WTC11 (cell line): ENCODE measurements at regions of chr17 and their contacts with region 1.

Region 1: DNA sequence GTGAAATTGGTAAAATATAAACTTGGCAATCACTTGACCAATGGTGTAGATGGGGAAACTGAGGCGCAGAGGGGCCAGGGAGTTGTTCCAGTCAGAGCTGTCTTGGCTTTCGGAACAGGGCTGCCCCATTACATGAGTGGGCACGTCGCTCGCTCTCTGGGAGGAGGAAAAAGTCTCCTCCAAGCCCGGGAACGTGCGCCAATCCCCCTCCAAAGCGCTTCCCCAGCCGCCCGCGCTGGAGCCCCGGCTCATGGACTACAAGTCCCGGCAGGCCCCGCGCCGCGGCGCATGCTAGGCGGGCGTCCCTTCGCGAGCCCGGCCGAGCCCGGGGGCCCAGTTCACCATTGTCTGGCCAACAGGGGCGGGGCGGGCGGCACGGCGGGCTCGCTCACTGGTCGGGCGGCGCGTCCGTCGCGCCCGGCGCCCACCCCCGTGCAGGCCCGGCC is 291 bp upstream of the LLGL1 start:
- DNase-seq: peak; percentile 98
- ATAC-seq: peak; percentile 72
- H3K4me3 Mint-ChIP-seq: peak overlapping the region; percentile 93
- H3K27ac Mint-ChIP-seq: peak overlapping the region; percentile 100
- H3K4me1 Mint-ChIP-seq: peaks cover 23% of the 10 kb centered on the region
- H3K27me3 Mint-ChIP-seq: no peaks in the 10 kb centered on the region
- CTCF ChIP-seq: no peak

Region 2: DNA sequence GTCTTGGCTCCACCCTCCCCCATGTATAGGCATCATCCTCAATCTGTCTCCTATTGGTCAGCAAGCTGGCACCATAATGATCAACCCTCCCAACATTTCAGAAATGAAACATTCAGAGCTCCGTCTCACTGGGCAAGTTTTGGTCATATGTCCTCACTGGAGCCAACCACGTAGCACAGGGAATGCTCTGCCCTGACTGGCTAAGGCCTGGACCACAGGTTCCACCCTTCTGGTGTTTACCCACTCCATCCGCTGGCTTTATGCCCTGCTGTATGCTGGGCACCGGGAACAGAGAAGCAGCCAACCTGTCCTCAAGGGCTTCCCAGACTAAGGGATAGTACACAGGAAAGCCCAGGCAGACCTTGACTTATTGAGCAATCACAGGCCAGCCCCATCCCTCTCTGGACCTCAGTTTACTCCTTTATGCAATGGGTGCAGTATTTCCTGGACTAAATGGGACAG is 96.1 kb before region 1 on chr17:
- CTCF ChIA-PET with region 1: no interaction called
- POLR2A ChIA-PET with region 1: no interaction called
- DNase-seq: no peak
- ATAC-seq: no peak
- H3K4me3 Mint-ChIP-seq: no peak overlapping the region
- H3K27ac Mint-ChIP-seq: no peak overlapping the region; the same call in 1 of the 2 replicates
- H3K4me1 Mint-ChIP-seq: no peaks in the 10 kb centered on the region; the same call in 1 of the 2 replicates
- H3K27me3 Mint-ChIP-seq: no peaks in the 10 kb centered on the region; the same call in 1 of the 2 replicates
- CTCF ChIP-seq: no peak

Region 3: DNA sequence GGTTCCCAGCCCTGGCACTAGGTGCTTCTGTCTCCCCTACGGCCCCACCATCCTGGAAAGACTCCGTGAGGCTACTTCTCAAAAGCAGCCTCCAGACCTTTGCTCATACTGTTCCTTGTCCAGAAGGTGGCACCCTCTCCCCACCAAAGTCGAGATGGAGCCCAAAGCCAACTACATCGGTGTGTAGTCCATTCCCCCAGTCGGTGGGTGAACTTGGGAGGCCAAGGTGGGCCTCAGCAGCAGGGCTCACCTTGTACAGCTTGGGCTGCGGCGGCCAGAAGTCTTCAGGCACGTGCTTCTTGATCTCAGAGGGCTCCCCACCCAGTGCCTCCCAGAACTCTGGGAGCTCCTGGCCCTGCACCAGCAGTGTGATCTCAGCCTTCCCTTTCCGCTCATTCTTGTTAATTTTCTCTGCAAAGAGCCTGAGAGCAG is 23.2 kb after region 1 on chr17:
- CTCF ChIA-PET with region 1: interaction called, 7 read pairs
- POLR2A ChIA-PET with region 1: interaction called, 17 read pairs
- DNase-seq: peak; percentile 76
- ATAC-seq: peak; percentile 43
- H3K4me3 Mint-ChIP-seq: peak overlapping the region; percentile 55
- H3K27ac Mint-ChIP-seq: peak overlapping the region; percentile 99
- H3K4me1 Mint-ChIP-seq: peaks cover 25% of the 10 kb centered on the region
- H3K27me3 Mint-ChIP-seq: no peaks in the 10 kb centered on the region
- CTCF ChIP-seq: peak; percentile 50; the same call in 1 of the 2 replicates

Region 4: GRCh38 chr17:18260332-18261144 is 35.4 kb after region 1 on chr17 and contains the start of gene MIEF2:
- CTCF ChIA-PET with region 1: interaction called, 5 read pairs
- POLR2A ChIA-PET with region 1: interaction called, 10 read pairs
- DNase-seq: peak; percentile 98
- ATAC-seq: peak; percentile 85
- H3K4me3 Mint-ChIP-seq: peak within 1 kb of the TSS; percentile 77
- H3K27ac Mint-ChIP-seq: peak within 1 kb of the TSS; percentile 93
- H3K4me1 Mint-ChIP-seq: peaks cover 29% of the 10 kb centered on the region
- H3K27me3 Mint-ChIP-seq: no peaks in the 10 kb centered on the region
- CTCF ChIP-seq: no peak
- total RNA-seq, gene MIEF2: 15.7 to 18.8 TPM (median 17.9 TPM) in 3 replicates